ENCODE measurements at regions of chr1 and their contacts with region 1.

Region 1: DNA sequence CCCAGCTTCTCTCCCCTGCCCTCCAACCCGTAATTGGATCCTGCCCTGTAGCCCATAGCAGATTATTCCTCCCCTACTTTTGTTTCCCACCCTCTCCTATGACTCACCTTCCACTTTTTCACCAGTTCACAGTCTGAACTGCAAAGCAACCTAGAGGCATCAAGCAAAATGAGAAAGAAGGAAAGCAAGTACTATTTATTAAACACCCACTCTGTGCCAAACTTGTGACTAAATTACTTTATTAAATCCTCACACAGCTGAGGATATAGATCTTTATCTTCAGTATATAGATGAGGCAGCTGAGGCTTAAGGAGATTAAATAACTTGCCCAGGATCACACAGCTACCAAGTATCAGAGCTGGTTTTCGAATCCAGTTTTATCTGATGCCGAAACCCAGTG is 20.7 kb upstream of the IKBKE start:
- H3K4me3 ChIP-seq: no peak overlapping the region
- H3K27ac ChIP-seq: no peak overlapping the region
- H3K4me1 ChIP-seq: no peaks in the 10 kb centered on the region
- CTCF ChIP-seq: no peak

Region 2: GRCh38 chr1:206461602-206462455 is 12.2 kb after region 1 on chr1:
- CTCF ChIA-PET with region 1: interaction called, 18 read pairs
- POLR2A ChIA-PET with region 1: no interaction called
- H3K4me3 ChIP-seq: no peak overlapping the region
- H3K27ac ChIP-seq: no peak overlapping the region
- H3K4me1 ChIP-seq: no peaks in the 10 kb centered on the region
- CTCF ChIP-seq: peak; percentile 60